ENCODE measurements at regions of chr2 and their contacts with region 1.

Region 1: GRCh38 chr2:64653349-64654062 is at the start of gene SERTAD2:
- DNase-seq: peak; percentile 75
- ATAC-seq: peak; percentile 76
- H3K4me3 ChIP-seq: peak within 1 kb of the TSS; percentile 92 to 97 (median 94)
- H3K27ac ChIP-seq: peak within 1 kb of the TSS; percentile 96
- H3K4me1 ChIP-seq: peaks cover 71% of the 10 kb centered on the region
- H3K27me3 ChIP-seq: no peaks in the 10 kb centered on the region; a peak in 1 of 5 replicates
- CTCF ChIP-seq: peak; percentile 58
- EP300 ChIP-seq: no peak
- POLR2A ChIP-seq: peak; percentile 56 to 86; a peak in 3 of 4 replicates
- RAD21 ChIP-seq: peak; percentile 39
- total RNA-seq, gene SERTAD2: 6.7 and 11.8 TPM in 2 replicates

Region 2: GRCh38 chr2:64609227-64609941 is 44.1 kb before region 1 on chr2:
- CTCF ChIA-PET with region 1: no interaction called
- POLR2A ChIA-PET with region 1: interaction called, 19 read pairs
- in situ Hi-C with region 1: no loop called
- intact Hi-C with region 1: loop called (anchors 5 kb)
- DNase-seq: no peak
- ATAC-seq: peak; percentile 34
- H3K4me3 ChIP-seq: peak overlapping the region; percentile 51 to 68 (median 58); a peak in 5 of 6 replicates
- H3K27ac ChIP-seq: no peak overlapping the region
- H3K4me1 ChIP-seq: peaks cover 28% of the 10 kb centered on the region
- H3K27me3 ChIP-seq: no peaks in the 10 kb centered on the region
- CTCF ChIP-seq: no peak; the same call in 1 of the 2 replicates
- EP300 ChIP-seq: no peak
- POLR2A ChIP-seq: peak in 1 of 2 experiments; percentile 46; a peak in 1 of 4 replicates
- RAD21 ChIP-seq: peak; percentile 35; the same call in 1 of the 2 replicates

Region 3: DNA sequence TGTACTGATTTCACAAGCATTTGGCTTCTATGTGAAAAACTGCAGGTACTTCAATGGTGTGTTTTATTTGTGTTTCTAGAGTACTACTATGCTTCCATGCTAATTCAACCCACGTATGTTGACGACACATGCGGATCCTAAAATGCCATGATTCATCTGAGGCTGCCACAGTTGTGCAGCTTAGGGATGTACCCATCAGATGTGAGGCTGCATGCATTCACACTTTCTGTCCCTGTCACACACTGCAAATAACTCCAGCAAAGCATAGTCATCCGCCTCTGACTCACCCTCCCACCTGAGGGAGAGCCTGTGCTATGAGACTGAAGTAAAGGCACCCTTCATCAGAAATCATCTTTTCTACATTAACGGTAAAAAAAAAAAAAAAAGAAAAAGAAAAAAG is 22.4 kb after region 1 on chr2:
- CTCF ChIA-PET with region 1: no interaction called
- POLR2A ChIA-PET with region 1: interaction called, 25 read pairs
- in situ Hi-C with region 1: no loop called
- intact Hi-C with region 1: no loop called
- DNase-seq: peak; percentile 51
- ATAC-seq: peak; percentile 54; the same call in 1 of the 3 replicates
- H3K4me3 ChIP-seq: no peak overlapping the region
- H3K27ac ChIP-seq: no peak overlapping the region
- H3K4me1 ChIP-seq: peaks cover 22% of the 10 kb centered on the region
- H3K27me3 ChIP-seq: no peaks in the 10 kb centered on the region
- CTCF ChIP-seq: no peak
- EP300 ChIP-seq: no peak
- POLR2A ChIP-seq: no peak
- RAD21 ChIP-seq: no peak

Region 4: GRCh38 chr2:64730551-64731262 is 77.2 kb after region 1 on chr2:
- CTCF ChIA-PET with region 1: no interaction called
- POLR2A ChIA-PET with region 1: interaction called, 46 read pairs
- in situ Hi-C with region 1: no loop called
- intact Hi-C with region 1: no loop called
- DNase-seq: peak; percentile 94
- ATAC-seq: peak; percentile 91
- H3K4me3 ChIP-seq: peak overlapping the region; percentile 10 to 59 (median 46)
- H3K27ac ChIP-seq: peak overlapping the region; percentile 83
- H3K4me1 ChIP-seq: peaks cover 76% of the 10 kb centered on the region
- H3K27me3 ChIP-seq: no peaks in the 10 kb centered on the region
- CTCF ChIP-seq: no peak
- EP300 ChIP-seq: peak; percentile 81 to 89; a peak in 3 of 4 replicates
- POLR2A ChIP-seq: peak in 1 of 2 experiments; percentile 64; a peak in 2 of 4 replicates
- RAD21 ChIP-seq: no peak

Region 5: DNA sequence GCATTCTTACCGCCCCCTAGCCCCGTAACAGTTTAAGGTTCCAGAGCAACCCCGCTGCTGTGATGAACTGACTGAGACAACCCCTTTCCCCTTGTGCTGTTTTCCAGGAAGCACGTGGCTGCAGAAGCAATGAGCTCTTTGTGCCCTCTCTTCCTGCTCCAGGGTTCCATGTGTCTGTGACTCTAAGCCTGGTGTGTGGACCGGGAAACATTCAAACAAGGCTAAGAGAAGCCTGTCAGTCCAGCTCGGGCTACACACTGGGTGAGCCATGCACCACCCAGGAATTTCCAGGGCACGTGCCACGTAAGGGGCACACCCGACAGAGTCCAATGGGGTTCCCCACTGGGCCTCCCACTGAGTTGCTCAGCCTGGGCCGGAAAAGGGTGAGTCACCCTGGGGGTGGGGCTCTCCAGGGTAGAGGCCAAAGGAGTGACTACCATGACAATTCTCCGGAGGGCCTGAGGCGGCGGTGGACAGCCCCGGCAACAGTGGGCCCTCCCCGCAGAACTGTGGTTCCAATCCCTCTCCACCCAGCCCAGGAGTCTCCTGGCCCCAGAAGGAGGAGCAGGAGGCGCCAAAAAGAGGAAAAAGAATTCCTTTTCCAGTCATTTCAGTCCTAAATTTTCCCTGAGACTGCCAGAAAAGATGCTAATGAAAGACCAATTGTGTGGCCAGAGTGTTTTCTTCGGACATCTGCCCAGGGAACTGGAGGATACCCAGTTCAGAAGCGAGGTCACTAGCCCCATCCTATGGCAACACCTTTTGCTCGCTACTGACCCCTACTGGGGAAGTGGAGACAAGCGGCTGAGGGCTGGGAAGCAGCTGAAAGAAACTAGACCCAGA is 177.8 kb after region 1 on chr2:
- CTCF ChIA-PET with region 1: interaction called, 3 read pairs
- POLR2A ChIA-PET with region 1: interaction called, 24 read pairs
- in situ Hi-C with region 1: no loop called
- intact Hi-C with region 1: no loop called
- DNase-seq: peak; percentile 88
- ATAC-seq: peak; percentile 93
- H3K4me3 ChIP-seq: peak overlapping the region; percentile 6 to 49 (median 7); a peak in 4 of 6 replicates
- H3K27ac ChIP-seq: peak overlapping the region; percentile 55
- H3K4me1 ChIP-seq: peaks cover 52% of the 10 kb centered on the region
- H3K27me3 ChIP-seq: peaks cover 0 to 13% of the 10 kb centered on the region in 2 experiments; a peak in 1 of 5 replicates
- CTCF ChIP-seq: peak; percentile 89
- EP300 ChIP-seq: peak in 1 of 2 experiments; percentile 76; a peak in 2 of 4 replicates
- POLR2A ChIP-seq: no peak; a peak in 1 of 4 replicates
- RAD21 ChIP-seq: peak; percentile 53

Region 6: GRCh38 chr2:64914735-64915509 is 261.4 kb after region 1 on chr2:
- CTCF ChIA-PET with region 1: no interaction called
- POLR2A ChIA-PET with region 1: no interaction called
- in situ Hi-C with region 1: no loop called
- intact Hi-C with region 1: loop called (anchors 1 kb)
- DNase-seq: no peak
- ATAC-seq: no peak
- H3K4me3 ChIP-seq: no peak overlapping the region
- H3K27ac ChIP-seq: no peak overlapping the region
- H3K4me1 ChIP-seq: peaks cover 6% of the 10 kb centered on the region; the same call in 1 of the 2 replicates
- H3K27me3 ChIP-seq: 0 out of 5 replicates have a peak, but pooled peaks cover 0 to 4% of the 10 kb centered on the region in 2 experiments
- CTCF ChIP-seq: no peak
- EP300 ChIP-seq: no peak
- POLR2A ChIP-seq: no peak
- RAD21 ChIP-seq: no peak